Activated naive CD4-positive, alpha-beta T cell treated with anti-CD3 and anti-CD28 coated beads for 36 hours (primary cell): ENCODE measurements at regions of chr17 and their contacts with region 1.

Region 1: GRCh38 chr17:65231662-65232335 is 94.6 kb downstream of the RGS9 start:
- DNase-seq: peak; percentile 74
- H3K4me3 Mint-ChIP-seq: no peak overlapping the region
- H3K27ac Mint-ChIP-seq: no peak overlapping the region
- H3K4me1 Mint-ChIP-seq: peaks cover 27% of the 10 kb centered on the region
- H3K27me3 Mint-ChIP-seq: peaks cover 15% of the 10 kb centered on the region

Region 2: DNA sequence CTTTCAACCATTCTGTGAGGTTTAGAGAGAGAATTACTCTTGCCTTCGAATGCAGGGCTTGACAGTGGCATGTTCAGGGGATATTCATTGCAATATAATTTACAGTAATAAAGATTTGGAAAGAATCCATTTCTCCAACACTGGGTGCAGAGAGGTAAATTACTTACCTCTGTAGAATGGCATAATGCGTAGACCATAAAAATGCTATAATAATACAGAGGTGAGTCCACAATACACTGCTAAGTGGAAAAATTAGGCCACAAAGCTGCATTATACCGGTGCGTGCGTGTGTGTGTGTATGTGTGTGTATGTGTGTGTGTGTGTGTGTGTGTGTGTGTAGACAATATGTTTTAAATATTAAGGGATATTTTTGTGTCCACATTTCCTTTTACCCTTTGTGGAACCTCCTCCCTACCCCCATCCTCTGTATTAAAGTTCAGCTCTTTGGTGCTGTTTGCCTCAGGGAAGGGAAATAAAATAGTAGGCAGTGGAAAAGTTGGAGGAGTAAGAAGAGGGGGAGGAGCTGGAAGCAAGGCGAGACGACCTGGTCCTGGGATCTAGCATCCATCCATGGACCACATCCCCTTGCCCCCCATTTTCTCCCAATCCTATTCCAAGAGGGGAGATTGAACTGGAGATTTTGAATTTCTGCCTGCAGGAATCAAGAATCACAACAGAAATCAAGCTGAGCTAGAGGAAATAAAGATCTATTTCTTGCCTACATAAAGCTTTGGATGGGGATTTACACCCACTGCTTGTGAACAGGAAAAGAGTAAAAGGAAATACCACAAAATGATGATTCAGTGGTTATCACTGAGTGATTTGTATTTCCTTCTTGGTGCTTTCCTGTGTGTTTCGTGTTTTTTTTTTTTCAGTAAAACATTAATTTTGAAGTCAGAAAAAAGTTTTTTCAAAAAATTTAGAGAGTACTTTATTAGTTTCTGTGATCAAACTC is 30.2 kb after region 1 on chr17:
- CTCF ChIA-PET with region 1: interaction called, 5 read pairs
- intact Hi-C with region 1: loop called (anchors 2 kb)
- DNase-seq: no peak
- H3K4me3 Mint-ChIP-seq: no peak overlapping the region
- H3K27ac Mint-ChIP-seq: no peak overlapping the region
- H3K4me1 Mint-ChIP-seq: peaks cover 22% of the 10 kb centered on the region
- H3K27me3 Mint-ChIP-seq: peaks cover 11% of the 10 kb centered on the region

Region 3: DNA sequence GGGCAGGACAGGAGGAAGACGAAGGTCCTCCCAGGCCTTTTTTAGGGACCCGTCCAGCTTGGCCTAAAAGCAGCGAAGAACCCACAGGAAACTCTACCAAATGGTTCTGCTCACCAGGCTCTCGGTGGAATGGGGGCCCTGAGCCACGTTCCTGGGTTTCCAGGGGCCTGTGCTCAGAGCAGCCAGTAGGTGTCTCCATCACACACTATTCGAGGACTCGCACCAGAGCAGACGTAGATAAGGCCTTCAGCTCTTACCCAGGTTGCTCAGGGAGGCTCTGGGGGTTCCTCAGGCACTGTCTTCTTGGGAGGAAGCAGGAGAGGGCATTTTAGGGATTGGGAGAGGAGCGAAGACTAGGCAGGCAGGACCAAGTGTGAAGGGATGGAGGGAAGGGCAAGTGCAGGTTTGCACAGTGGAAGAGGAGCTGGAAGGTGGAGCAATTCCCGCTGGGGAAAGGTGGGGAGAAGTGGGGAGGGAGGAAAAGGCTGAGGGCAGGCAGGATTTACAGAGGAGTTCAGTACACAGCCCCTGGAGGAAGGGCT is 62.5 kb after region 1 on chr17:
- CTCF ChIA-PET with region 1: interaction called, 20 read pairs
- intact Hi-C with region 1: loop called (anchors 5 kb)
- DNase-seq: peak; percentile 76
- H3K4me3 Mint-ChIP-seq: no peak overlapping the region
- H3K27ac Mint-ChIP-seq: no peak overlapping the region
- H3K4me1 Mint-ChIP-seq: peaks cover 4% of the 10 kb centered on the region
- H3K27me3 Mint-ChIP-seq: no peaks in the 10 kb centered on the region

Region 4: GRCh38 chr17:65463242-65463641 is 231.4 kb after region 1 on chr17:
- CTCF ChIA-PET with region 1: no interaction called
- intact Hi-C with region 1: no loop called
- DNase-seq: no peak
- H3K4me3 Mint-ChIP-seq: no peak overlapping the region
- H3K27ac Mint-ChIP-seq: no peak overlapping the region
- H3K4me1 Mint-ChIP-seq: no peaks in the 10 kb centered on the region
- H3K27me3 Mint-ChIP-seq: no peaks in the 10 kb centered on the region

Region 5: GRCh38 chr17:65656382-65657250 is 424.8 kb after region 1 on chr17:
- CTCF ChIA-PET with region 1: no interaction called
- intact Hi-C with region 1: loop called (anchors 1 kb)
- DNase-seq: peak; percentile 84
- H3K4me3 Mint-ChIP-seq: no peak overlapping the region
- H3K27ac Mint-ChIP-seq: peak overlapping the region; percentile 56
- H3K4me1 Mint-ChIP-seq: peaks cover 35% of the 10 kb centered on the region
- H3K27me3 Mint-ChIP-seq: peaks cover 9% of the 10 kb centered on the region

Region 6: DNA sequence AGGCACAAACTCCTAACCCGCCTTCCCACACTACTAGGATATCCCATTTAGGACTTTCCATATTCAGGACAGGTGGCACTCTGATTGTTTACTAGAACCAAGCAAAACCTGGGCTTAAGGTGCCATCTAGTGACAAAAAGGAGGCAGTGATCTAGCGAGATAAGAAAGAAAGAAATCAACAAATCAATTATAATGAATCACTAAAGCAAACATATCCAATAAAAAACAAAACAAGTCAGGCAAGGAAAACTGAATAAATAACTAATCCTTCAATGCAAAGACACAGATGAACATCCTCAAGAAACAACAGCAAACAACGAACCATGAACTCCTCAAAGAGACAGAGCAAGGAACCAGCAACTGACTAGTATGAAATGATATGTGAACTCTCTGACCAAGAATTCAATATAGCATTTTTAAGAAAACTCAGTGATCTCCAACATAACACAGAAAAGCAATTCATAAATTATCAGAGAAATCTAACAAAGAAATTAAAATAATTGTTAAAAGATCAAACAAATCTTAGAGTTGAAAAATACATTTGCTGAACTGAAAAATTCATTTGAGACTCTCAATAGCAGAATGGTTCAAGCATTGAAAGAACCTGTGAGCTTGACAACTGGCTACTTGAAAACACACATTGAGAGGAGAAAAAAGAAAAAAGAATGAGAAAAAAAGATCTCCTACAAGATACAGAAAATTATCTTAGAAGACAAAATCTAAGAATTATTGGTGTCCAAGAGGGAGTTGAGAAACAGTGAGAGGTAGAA is 756.5 kb after region 1 on chr17:
- CTCF ChIA-PET with region 1: interaction called, 6 read pairs
- intact Hi-C with region 1: loop called (anchors 1 kb)
- DNase-seq: peak; percentile 20
- H3K4me3 Mint-ChIP-seq: no peak overlapping the region
- H3K27ac Mint-ChIP-seq: no peak overlapping the region
- H3K4me1 Mint-ChIP-seq: no peaks in the 10 kb centered on the region
- H3K27me3 Mint-ChIP-seq: peaks cover 2% of the 10 kb centered on the region